ENCODE measurements at regions of chr13 and their contacts with region 1.

Region 1: GRCh38 chr13:76991796-76992547 is at the start of gene CLN5:
- DNase-seq: peak; percentile 93 to 98 (median 96)
- ATAC-seq: peak; percentile 92
- H3K4me3 ChIP-seq: peak within 1 kb of the TSS; percentile 87
- H3K4me3 Mint-ChIP-seq: peak within 1 kb of the TSS; percentile 88 to 99 (median 96)
- H3K27ac ChIP-seq: peak within 1 kb of the TSS; percentile 96
- H3K27ac Mint-ChIP-seq: peak within 1 kb of the TSS; percentile 96 to 99 (median 99)
- H3K4me1 ChIP-seq: peaks cover 12 to 19% of the 10 kb centered on the region in 2 donors
- H3K4me1 Mint-ChIP-seq: peaks cover 27 to 59% (median 53%) of the 10 kb centered on the region in 7 donors
- H3K27me3 ChIP-seq: peaks cover 0 to 3% of the 10 kb centered on the region in 2 donors
- H3K27me3 Mint-ChIP-seq: peaks cover 0 to 12% (median 0%) of the 10 kb centered on the region in 5 donors
- total RNA-seq, gene CLN5: 18.9 to 45.3 (median 27.7) TPM

Region 2: DNA sequence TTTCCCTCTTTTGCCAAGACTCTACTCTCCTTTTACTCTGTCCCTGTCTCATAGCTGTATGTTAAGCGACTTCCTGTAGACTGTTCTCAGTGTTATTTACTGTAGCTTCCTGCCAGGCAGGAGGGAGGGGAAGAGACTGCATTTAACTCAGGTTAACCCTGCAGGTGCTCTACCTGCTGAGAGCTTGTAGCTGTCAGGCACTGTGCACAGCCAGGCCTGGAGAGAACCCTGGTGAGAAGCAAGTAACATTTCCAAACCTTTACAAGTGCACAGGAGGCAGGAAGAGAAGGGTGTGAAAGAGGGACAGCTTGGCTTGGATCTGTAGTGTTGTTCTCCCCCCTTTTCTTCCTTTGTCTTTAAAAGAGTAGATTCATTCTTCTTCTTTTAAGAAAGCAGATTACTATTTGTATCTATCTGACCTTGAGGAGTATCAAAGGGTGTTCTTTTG is 1188.8 kb before region 1 on chr13:
- CTCF ChIA-PET with region 1: no interaction called
- POLR2A ChIA-PET with region 1: no interaction called
- intact Hi-C with region 1: loop called in 1 of 2 experiments (anchors 5 kb)
- DNase-seq: peak in 7 of 9 donors; percentile 40 to 68 (median 62)
- ATAC-seq: peak; percentile 95
- H3K4me3 ChIP-seq: peak overlapping the region; percentile 4
- H3K4me3 Mint-ChIP-seq: peak overlapping the region; percentile 4 to 85 (median 78)
- H3K27ac ChIP-seq: peak overlapping the region; percentile 60
- H3K27ac Mint-ChIP-seq: peak overlapping the region in 8 of 9 donors; percentile 88 to 97 (median 92)
- H3K4me1 ChIP-seq: peaks cover 0 to 33% of the 10 kb centered on the region in 2 donors
- H3K4me1 Mint-ChIP-seq: peaks cover 15 to 70% (median 49%) of the 10 kb centered on the region in 7 donors
- H3K27me3 ChIP-seq: no peaks in the 10 kb centered on the region
- H3K27me3 Mint-ChIP-seq: no peaks in the 10 kb centered on the region

Region 3: GRCh38 chr13:76879203-76879882 is 112.6 kb before region 1 on chr13:
- CTCF ChIA-PET with region 1: no interaction called
- POLR2A ChIA-PET with region 1: interaction called, 35 read pairs
- intact Hi-C with region 1: no loop called
- DNase-seq: peak in 8 of 9 donors; percentile 46 to 66 (median 56)
- ATAC-seq: peak; percentile 94
- H3K4me3 ChIP-seq: peak overlapping the region; percentile 3
- H3K4me3 Mint-ChIP-seq: peak overlapping the region; percentile 56 to 87 (median 69)
- H3K27ac ChIP-seq: peak overlapping the region; percentile 31
- H3K27ac Mint-ChIP-seq: peak overlapping the region; percentile 52 to 93 (median 78)
- H3K4me1 ChIP-seq: peaks cover 0 to 21% of the 10 kb centered on the region in 2 donors
- H3K4me1 Mint-ChIP-seq: peaks cover 17 to 51% (median 46%) of the 10 kb centered on the region in 7 donors
- H3K27me3 ChIP-seq: no peaks in the 10 kb centered on the region
- H3K27me3 Mint-ChIP-seq: peaks cover 0 to 15% (median 0%) of the 10 kb centered on the region in 5 donors

Region 4: GRCh38 chr13:77002590-77003190 is 10.7 kb after region 1 on chr13:
- CTCF ChIA-PET with region 1: interaction called, 7 read pairs
- POLR2A ChIA-PET with region 1: interaction called, 47 read pairs
- intact Hi-C with region 1: loop called (anchors 1 kb)
- DNase-seq: no peak
- ATAC-seq: no peak
- H3K4me3 ChIP-seq: no peak overlapping the region
- H3K4me3 Mint-ChIP-seq: peak overlapping the region in 1 of 10 donors; percentile 2
- H3K27ac ChIP-seq: peak overlapping the region; percentile 17
- H3K27ac Mint-ChIP-seq: peak overlapping the region in 6 of 9 donors; percentile 3 to 84 (median 70)
- H3K4me1 ChIP-seq: no peaks in the 10 kb centered on the region
- H3K4me1 Mint-ChIP-seq: peaks cover 7 to 68% (median 55%) of the 10 kb centered on the region in 7 donors
- H3K27me3 ChIP-seq: no peaks in the 10 kb centered on the region
- H3K27me3 Mint-ChIP-seq: no peaks in the 10 kb centered on the region

Region 5: GRCh38 chr13:77026818-77027585 is 35.0 kb after region 1 on chr13 and contains the start of gene FBXL3:
- CTCF ChIA-PET with region 1: interaction called, 7 read pairs
- POLR2A ChIA-PET with region 1: interaction called, 170 read pairs
- intact Hi-C with region 1: loop called (anchors 1 kb)
- DNase-seq: peak; percentile 77 to 88 (median 84)
- ATAC-seq: peak; percentile 90
- H3K4me3 ChIP-seq: peak within 1 kb of the TSS; percentile 87
- H3K4me3 Mint-ChIP-seq: peak within 1 kb of the TSS; percentile 93 to 100 (median 98)
- H3K27ac ChIP-seq: peak within 1 kb of the TSS; percentile 100
- H3K27ac Mint-ChIP-seq: peak within 1 kb of the TSS; percentile 92 to 99 (median 94)
- H3K4me1 ChIP-seq: peaks cover 30 to 35% of the 10 kb centered on the region in 2 donors
- H3K4me1 Mint-ChIP-seq: peaks cover 36 to 61% (median 51%) of the 10 kb centered on the region in 7 donors
- H3K27me3 ChIP-seq: no peaks in the 10 kb centered on the region
- H3K27me3 Mint-ChIP-seq: peaks cover 0 to 6% (median 3%) of the 10 kb centered on the region in 5 donors
- total RNA-seq, gene FBXL3: 44.2 to 94.2 (median 70.8) TPM

Region 6: GRCh38 chr13:77079902-77080413 is 88.0 kb after region 1 on chr13:
- CTCF ChIA-PET with region 1: no interaction called
- POLR2A ChIA-PET with region 1: no interaction called
- intact Hi-C with region 1: no loop called
- DNase-seq: no peak
- ATAC-seq: no peak
- H3K4me3 ChIP-seq: no peak overlapping the region
- H3K4me3 Mint-ChIP-seq: no peak overlapping the region
- H3K27ac ChIP-seq: no peak overlapping the region
- H3K27ac Mint-ChIP-seq: peak overlapping the region in 1 of 9 donors; percentile 7
- H3K4me1 ChIP-seq: no peaks in the 10 kb centered on the region
- H3K4me1 Mint-ChIP-seq: peaks cover 0 to 12% (median 3%) of the 10 kb centered on the region in 7 donors
- H3K27me3 ChIP-seq: no peaks in the 10 kb centered on the region
- H3K27me3 Mint-ChIP-seq: no peaks in the 10 kb centered on the region

Measured in naive thymus-derived CD4-positive, alpha-beta T cell (primary cell).